Activated CD4-positive, alpha-beta memory T cell treated with anti-CD3 and anti-CD28 coated beads for 36 hours (primary cell): ENCODE measurements at regions of chr12 and their contacts with region 1.

Region 1: DNA sequence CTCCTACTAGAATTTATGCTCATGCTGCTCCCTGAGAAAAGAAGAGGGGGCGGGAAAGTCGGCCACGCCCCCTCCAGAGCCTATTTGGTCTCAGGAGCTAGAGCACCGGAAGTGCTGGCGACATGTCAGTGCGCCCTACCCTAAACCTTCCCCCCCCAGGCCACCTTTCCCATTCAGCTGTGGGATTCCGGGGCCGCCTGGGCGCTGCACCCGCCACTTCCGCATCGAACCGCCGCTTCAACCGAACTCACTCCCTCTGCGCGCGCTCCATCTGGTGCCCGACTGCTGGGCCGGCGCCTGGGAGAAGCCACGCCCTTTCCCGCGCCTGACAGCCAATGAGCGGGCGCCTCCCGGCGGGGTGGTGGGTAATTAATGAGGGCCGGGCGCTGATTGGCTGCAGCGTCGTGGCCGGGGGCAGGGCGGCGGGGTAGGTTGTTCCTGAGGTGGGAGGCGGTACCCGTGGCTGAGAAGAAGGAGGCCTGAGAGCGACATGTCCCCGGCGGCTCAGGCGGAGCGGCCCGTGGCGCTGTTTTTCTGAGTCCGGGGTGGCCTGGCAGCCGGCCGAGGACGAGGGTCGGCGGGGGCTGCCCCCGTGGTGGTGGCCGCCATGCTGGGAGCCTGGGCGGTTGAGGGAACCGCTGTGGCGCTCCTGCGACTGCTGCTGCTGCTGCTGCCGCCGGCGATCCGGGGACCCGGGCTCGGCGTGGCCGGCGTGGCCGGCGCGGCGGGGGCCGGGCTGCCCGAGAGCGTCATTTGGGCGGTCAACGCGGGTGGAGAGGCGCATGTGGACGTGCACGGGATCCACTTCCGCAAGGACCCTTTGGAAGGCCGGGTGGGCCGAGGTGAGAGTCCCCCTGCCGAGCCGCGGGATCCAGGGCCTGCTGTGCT is at the start of gene MLEC:
- DNase-seq: peak; percentile 99
- H3K4me3 Mint-ChIP-seq: peak within 1 kb of the TSS; percentile 90
- H3K27ac Mint-ChIP-seq: peak within 1 kb of the TSS; percentile 91
- H3K4me1 Mint-ChIP-seq: peaks cover 50% of the 10 kb centered on the region
- H3K27me3 Mint-ChIP-seq: no peaks in the 10 kb centered on the region
- total RNA-seq, gene MLEC: 92.9 to 93.7 TPM

Region 2: DNA sequence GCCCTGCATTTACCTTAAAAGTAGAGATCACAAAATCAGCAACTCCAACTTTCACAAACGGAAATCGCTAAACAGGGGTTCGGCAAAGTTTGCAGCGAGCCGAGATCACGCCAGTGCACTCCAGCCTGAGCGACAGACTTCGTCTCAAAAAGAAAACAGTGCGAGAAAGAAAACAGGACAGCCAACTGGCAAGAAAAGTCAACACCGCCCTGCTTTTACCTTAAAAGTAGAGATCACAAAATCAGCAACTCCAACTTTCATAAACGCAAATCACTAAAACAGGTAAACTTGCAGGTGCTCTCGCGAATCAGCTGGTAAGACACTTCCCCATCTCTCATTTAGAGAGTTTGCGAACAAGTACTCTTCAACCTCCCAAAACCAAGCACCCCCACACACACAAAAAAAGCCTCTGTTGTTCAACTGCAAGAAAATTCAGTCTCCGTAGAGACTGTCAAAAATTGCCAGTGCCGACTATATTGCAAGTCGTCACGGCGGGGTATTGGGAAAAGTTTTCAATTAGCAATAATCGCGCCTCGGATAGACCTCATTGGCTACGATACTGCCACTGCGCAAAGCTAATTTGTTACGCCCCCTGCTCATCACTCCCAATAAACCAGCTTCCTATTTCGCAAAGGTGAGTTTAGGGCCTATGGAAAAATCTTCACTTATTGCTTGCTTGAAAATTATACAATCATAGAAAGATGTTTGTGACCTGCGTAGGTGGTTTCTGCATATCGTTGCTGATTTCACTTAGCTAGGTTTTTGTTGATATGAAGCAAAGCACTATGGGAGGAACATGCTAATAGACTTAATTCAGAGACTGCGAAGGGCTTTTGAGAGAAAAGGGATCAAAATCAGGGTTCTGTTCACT is 394.0 kb before region 1 on chr12 and contains the start of gene RNU4-1:
- CTCF ChIA-PET with region 1: no interaction called
- POLR2A ChIA-PET with region 1: no interaction called
- intact Hi-C with region 1: loop called (anchors 10 kb)
- DNase-seq: peak; percentile 87
- H3K4me3 Mint-ChIP-seq: no peak within 1 kb of the TSS
- H3K27ac Mint-ChIP-seq: no peak within 1 kb of the TSS
- H3K4me1 Mint-ChIP-seq: peaks cover 5% of the 10 kb centered on the region
- H3K27me3 Mint-ChIP-seq: no peaks in the 10 kb centered on the region
- total RNA-seq, gene RNU4-1: 1,180 to 1,201 TPM

Region 3: GRCh38 chr12:120437754-120438494 is 249.0 kb before region 1 on chr12 and contains the start of gene COX6A1:
- CTCF ChIA-PET with region 1: no interaction called
- POLR2A ChIA-PET with region 1: no interaction called
- intact Hi-C with region 1: loop called (anchors 2 kb)
- DNase-seq: peak; percentile 99
- H3K4me3 Mint-ChIP-seq: peak within 1 kb of the TSS; percentile 99
- H3K27ac Mint-ChIP-seq: peak within 1 kb of the TSS; percentile 92
- H3K4me1 Mint-ChIP-seq: peaks cover 22% of the 10 kb centered on the region
- H3K27me3 Mint-ChIP-seq: peaks cover 2% of the 10 kb centered on the region
- total RNA-seq, gene COX6A1: 474 to 478 TPM

Region 4: DNA sequence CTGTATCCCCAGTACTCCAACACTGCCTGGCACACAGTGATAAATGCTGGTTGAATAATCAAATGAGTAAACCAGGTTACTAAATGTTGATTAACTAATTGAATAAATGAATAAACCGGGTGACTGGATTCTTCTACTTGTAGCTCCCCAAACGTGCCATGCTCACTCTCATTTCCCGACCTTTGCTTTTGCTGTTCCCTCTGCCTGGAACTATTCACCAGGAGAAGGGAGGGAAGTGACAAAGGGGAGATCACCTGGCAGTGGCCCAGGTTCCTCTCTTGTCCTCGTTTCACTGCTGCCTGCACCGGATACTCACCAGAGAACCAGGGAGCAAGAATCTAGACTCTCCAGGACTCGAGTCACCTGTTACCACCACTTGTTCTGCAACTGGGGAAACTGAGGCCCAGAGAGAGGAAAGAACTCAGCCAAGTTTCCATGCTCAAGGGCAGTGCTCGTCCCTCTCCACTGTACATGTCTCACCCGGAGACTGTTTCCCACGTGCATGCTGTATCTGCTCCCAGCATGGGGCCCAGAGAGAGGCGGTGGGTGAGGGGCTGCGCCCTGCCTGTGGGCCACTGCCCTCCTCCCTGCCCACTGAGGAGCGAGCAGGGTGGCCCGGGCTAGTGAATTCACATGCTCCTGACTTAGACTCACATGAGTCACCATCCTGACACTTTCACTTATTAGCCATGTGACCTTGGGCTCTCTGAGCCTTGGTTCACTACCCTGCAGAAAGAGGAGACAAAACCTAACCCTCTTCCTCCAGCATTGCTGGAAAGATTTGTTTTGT is 88.1 kb before region 1 on chr12:
- CTCF ChIA-PET with region 1: no interaction called
- POLR2A ChIA-PET with region 1: no interaction called
- intact Hi-C with region 1: no loop called
- DNase-seq: no peak
- H3K4me3 Mint-ChIP-seq: no peak overlapping the region
- H3K27ac Mint-ChIP-seq: no peak overlapping the region
- H3K4me1 Mint-ChIP-seq: no peaks in the 10 kb centered on the region
- H3K27me3 Mint-ChIP-seq: peaks cover 13% of the 10 kb centered on the region

Region 5: DNA sequence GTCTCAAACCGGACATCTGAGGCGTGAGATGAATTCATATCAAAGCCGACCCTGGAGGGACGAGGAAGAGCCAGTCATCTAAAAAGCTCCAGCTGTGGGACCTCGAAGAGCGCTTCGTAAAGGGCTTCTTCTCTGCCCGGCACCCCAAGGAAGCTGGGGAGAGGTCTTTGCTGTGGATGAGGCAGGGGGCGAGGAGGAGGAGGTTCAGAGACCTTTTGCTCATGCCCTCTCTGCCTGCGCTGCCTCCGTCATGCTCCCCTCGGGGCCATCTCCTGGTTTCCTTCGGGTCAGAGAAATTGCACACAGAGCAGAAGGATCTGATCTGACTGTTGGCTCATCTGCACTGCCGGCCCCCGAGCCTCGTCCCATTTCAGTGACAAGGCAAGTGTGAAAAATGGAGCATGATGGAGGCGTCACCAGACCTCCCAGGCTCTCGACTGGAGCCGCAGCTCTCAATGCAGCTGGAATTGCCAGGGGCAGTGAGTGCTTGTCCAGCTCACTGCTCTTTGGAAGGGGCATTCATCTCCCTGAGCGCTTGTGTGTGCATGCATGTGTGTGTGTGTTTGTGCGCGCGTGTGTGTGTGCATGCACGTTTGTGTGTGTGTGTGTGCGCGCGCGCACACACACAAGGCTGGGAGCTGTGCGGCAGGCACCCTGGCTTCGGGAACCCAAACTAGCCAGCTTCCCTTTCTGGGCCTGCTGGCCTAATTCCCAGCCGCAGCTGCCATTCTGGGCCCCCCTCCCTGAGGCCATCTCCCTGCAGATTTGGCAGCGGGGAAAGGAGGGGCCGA is 37.3 kb before region 1 on chr12:
- CTCF ChIA-PET with region 1: interaction called, 44 read pairs
- POLR2A ChIA-PET with region 1: no interaction called
- intact Hi-C with region 1: loop called (anchors 1 kb)
- DNase-seq: no peak
- H3K4me3 Mint-ChIP-seq: peak overlapping the region; percentile 45
- H3K27ac Mint-ChIP-seq: no peak overlapping the region
- H3K4me1 Mint-ChIP-seq: peaks cover 15% of the 10 kb centered on the region
- H3K27me3 Mint-ChIP-seq: peaks cover 44% of the 10 kb centered on the region

Region 6: GRCh38 chr12:120904197-120904773 is 217.4 kb after region 1 on chr12 and contains the start of gene SPPL3:
- CTCF ChIA-PET with region 1: no interaction called
- POLR2A ChIA-PET with region 1: no interaction called
- intact Hi-C with region 1: loop called (anchors 5 kb)
- DNase-seq: peak; percentile 93
- H3K4me3 Mint-ChIP-seq: peak within 1 kb of the TSS; percentile 99
- H3K27ac Mint-ChIP-seq: peak within 1 kb of the TSS; percentile 87
- H3K4me1 Mint-ChIP-seq: peaks cover 29% of the 10 kb centered on the region
- H3K27me3 Mint-ChIP-seq: no peaks in the 10 kb centered on the region
- total RNA-seq, gene SPPL3: 24.3 to 26.7 TPM

Region 7: GRCh38 chr12:121128970-121129810 is 442.3 kb after region 1 on chr12:
- CTCF ChIA-PET with region 1: no interaction called
- POLR2A ChIA-PET with region 1: no interaction called
- intact Hi-C with region 1: no loop called
- DNase-seq: peak; percentile 91
- H3K4me3 Mint-ChIP-seq: peak overlapping the region; percentile 54
- H3K27ac Mint-ChIP-seq: peak overlapping the region; percentile 98
- H3K4me1 Mint-ChIP-seq: peaks cover 73% of the 10 kb centered on the region
- H3K27me3 Mint-ChIP-seq: no peaks in the 10 kb centered on the region

Region 8: GRCh38 chr12:121209624-121210572 is 523.0 kb after region 1 on chr12 and contains the start of gene P2RX4:
- CTCF ChIA-PET with region 1: no interaction called
- POLR2A ChIA-PET with region 1: no interaction called
- intact Hi-C with region 1: loop called (anchors 10 kb)
- DNase-seq: peak; percentile 93
- H3K4me3 Mint-ChIP-seq: peak within 1 kb of the TSS; percentile 82
- H3K27ac Mint-ChIP-seq: peak within 1 kb of the TSS; percentile 87
- H3K4me1 Mint-ChIP-seq: peaks cover 35% of the 10 kb centered on the region
- H3K27me3 Mint-ChIP-seq: no peaks in the 10 kb centered on the region
- total RNA-seq, gene P2RX4: 53.4 to 57.5 TPM